ENCODE measurements at regions of chr12 and their contacts with region 1.

Region 1: DNA sequence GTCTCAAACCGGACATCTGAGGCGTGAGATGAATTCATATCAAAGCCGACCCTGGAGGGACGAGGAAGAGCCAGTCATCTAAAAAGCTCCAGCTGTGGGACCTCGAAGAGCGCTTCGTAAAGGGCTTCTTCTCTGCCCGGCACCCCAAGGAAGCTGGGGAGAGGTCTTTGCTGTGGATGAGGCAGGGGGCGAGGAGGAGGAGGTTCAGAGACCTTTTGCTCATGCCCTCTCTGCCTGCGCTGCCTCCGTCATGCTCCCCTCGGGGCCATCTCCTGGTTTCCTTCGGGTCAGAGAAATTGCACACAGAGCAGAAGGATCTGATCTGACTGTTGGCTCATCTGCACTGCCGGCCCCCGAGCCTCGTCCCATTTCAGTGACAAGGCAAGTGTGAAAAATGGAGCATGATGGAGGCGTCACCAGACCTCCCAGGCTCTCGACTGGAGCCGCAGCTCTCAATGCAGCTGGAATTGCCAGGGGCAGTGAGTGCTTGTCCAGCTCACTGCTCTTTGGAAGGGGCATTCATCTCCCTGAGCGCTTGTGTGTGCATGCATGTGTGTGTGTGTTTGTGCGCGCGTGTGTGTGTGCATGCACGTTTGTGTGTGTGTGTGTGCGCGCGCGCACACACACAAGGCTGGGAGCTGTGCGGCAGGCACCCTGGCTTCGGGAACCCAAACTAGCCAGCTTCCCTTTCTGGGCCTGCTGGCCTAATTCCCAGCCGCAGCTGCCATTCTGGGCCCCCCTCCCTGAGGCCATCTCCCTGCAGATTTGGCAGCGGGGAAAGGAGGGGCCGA is 9.2 kb downstream of the CABP1 start:
- DNase-seq: no peak
- ATAC-seq: peak; percentile 13
- H3K4me3 ChIP-seq: peak overlapping the region; percentile 61; the same call in 1 of the 2 replicates
- H3K27ac ChIP-seq: no peak overlapping the region
- H3K4me1 ChIP-seq: peaks cover 19% of the 10 kb centered on the region
- H3K27me3 ChIP-seq: no peaks in the 10 kb centered on the region
- CTCF ChIP-seq: no peak
- EP300 ChIP-seq: no peak
- POLR2A ChIP-seq: no peak
- RAD21 ChIP-seq: no peak

Region 2: DNA sequence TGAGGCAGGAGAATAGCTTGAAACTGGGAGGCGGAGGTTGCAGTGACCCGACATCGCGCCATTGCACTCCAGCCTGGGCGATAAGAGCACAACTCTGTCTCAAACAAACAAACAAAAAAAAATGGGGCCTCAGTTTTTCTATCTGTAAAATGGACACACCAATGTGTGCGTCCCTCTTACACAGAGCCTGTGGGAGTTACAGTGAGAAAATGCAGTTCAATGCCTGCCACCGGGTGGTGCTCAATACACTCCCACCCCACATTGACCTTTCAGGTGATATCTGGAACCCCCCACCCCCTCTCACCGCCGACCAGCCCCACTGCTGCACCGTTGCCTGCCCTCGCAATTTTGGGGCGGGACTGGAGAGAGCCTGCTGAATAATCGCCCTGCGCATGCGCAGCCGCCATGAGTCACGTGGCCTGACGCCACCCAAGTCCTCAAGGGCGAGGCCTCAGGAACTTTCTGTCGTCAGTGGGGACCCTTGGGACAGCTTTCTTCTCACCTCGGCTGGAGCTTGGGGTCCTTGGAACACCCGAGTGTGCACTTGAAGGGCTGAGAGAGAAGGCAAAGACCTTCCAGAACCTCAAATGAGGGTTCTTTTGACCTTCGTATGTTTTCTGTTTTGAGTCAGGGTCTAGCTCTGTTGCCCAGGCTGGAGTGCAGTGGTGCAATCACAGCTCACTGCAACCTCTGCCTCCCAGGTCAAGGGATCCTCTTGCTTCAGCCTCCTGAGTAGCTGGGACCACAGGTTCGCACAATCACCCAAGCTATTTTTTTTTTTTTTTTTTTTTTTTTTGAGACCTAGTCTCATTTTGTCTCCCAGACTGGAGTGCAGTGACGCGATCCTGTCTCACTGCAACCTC is 23.8 kb before region 1 on chr12:
- CTCF ChIA-PET with region 1: interaction called, 13 read pairs
- POLR2A ChIA-PET with region 1: no interaction called
- RAD21 ChIA-PET with region 1: interaction called, 3 read pairs
- SMC1A ChIA-PET with region 1: interaction called, 5 read pairs
- in situ Hi-C with region 1: no loop called
- intact Hi-C with region 1: no loop called
- DNase-seq: peak; percentile 11
- ATAC-seq: peak; percentile 90
- H3K4me3 ChIP-seq: no peak overlapping the region; the same call in 1 of the 2 replicates
- H3K27ac ChIP-seq: no peak overlapping the region
- H3K4me1 ChIP-seq: no peaks in the 10 kb centered on the region
- H3K27me3 ChIP-seq: no peaks in the 10 kb centered on the region; a peak in 2 of 4 replicates
- CTCF ChIP-seq: peak in 2 of 3 experiments; percentile 30 to 40; a peak in 3 of 6 replicates
- EP300 ChIP-seq: no peak
- POLR2A ChIP-seq: no peak
- RAD21 ChIP-seq: 0 out of 2 replicates have a peak, but pooled peaks have one; percentile 5

Region 3: GRCh38 chr12:120669055-120669840 is 19.6 kb after region 1 on chr12:
- CTCF ChIA-PET with region 1: interaction called, 454 read pairs
- POLR2A ChIA-PET with region 1: interaction called, 31 read pairs
- RAD21 ChIA-PET with region 1: interaction called, 77 read pairs
- SMC1A ChIA-PET with region 1: interaction called, 146 read pairs
- in situ Hi-C with region 1: no loop called
- intact Hi-C with region 1: loop called (anchors 2 kb)
- DNase-seq: peak; percentile 79
- ATAC-seq: peak; percentile 84
- H3K4me3 ChIP-seq: peak overlapping the region; percentile 39
- H3K27ac ChIP-seq: peak overlapping the region; percentile 46
- H3K4me1 ChIP-seq: peaks cover 38% of the 10 kb centered on the region
- H3K27me3 ChIP-seq: no peaks in the 10 kb centered on the region
- CTCF ChIP-seq: no peak
- EP300 ChIP-seq: no peak; a peak in 1 of 4 replicates
- POLR2A ChIP-seq: no peak
- RAD21 ChIP-seq: no peak

Region 4: DNA sequence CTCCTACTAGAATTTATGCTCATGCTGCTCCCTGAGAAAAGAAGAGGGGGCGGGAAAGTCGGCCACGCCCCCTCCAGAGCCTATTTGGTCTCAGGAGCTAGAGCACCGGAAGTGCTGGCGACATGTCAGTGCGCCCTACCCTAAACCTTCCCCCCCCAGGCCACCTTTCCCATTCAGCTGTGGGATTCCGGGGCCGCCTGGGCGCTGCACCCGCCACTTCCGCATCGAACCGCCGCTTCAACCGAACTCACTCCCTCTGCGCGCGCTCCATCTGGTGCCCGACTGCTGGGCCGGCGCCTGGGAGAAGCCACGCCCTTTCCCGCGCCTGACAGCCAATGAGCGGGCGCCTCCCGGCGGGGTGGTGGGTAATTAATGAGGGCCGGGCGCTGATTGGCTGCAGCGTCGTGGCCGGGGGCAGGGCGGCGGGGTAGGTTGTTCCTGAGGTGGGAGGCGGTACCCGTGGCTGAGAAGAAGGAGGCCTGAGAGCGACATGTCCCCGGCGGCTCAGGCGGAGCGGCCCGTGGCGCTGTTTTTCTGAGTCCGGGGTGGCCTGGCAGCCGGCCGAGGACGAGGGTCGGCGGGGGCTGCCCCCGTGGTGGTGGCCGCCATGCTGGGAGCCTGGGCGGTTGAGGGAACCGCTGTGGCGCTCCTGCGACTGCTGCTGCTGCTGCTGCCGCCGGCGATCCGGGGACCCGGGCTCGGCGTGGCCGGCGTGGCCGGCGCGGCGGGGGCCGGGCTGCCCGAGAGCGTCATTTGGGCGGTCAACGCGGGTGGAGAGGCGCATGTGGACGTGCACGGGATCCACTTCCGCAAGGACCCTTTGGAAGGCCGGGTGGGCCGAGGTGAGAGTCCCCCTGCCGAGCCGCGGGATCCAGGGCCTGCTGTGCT is 37.3 kb after region 1 on chr12 and contains the start of gene MLEC:
- CTCF ChIA-PET with region 1: interaction called, 454 read pairs
- POLR2A ChIA-PET with region 1: interaction called, 38 read pairs
- RAD21 ChIA-PET with region 1: interaction called, 144 read pairs
- SMC1A ChIA-PET with region 1: interaction called, 167 read pairs
- in situ Hi-C with region 1: no loop called
- intact Hi-C with region 1: loop called (anchors 1 kb)
- DNase-seq: peak; percentile 91
- ATAC-seq: peak; percentile 78
- H3K4me3 ChIP-seq: peak within 1 kb of the TSS; percentile 97
- H3K27ac ChIP-seq: peak within 1 kb of the TSS; percentile 96
- H3K4me1 ChIP-seq: peaks cover 15% of the 10 kb centered on the region
- H3K27me3 ChIP-seq: no peaks in the 10 kb centered on the region
- CTCF ChIP-seq: peak; percentile 26 to 79 (median 41); a peak in 5 of 6 replicates
- EP300 ChIP-seq: peak in 1 of 2 experiments; percentile 21; a peak in 1 of 4 replicates
- POLR2A ChIP-seq: peak; percentile 91
- RAD21 ChIP-seq: peak; percentile 68
- polyA plus RNA-seq, gene MLEC: 26.7 to 28.2 TPM

Region 5: DNA sequence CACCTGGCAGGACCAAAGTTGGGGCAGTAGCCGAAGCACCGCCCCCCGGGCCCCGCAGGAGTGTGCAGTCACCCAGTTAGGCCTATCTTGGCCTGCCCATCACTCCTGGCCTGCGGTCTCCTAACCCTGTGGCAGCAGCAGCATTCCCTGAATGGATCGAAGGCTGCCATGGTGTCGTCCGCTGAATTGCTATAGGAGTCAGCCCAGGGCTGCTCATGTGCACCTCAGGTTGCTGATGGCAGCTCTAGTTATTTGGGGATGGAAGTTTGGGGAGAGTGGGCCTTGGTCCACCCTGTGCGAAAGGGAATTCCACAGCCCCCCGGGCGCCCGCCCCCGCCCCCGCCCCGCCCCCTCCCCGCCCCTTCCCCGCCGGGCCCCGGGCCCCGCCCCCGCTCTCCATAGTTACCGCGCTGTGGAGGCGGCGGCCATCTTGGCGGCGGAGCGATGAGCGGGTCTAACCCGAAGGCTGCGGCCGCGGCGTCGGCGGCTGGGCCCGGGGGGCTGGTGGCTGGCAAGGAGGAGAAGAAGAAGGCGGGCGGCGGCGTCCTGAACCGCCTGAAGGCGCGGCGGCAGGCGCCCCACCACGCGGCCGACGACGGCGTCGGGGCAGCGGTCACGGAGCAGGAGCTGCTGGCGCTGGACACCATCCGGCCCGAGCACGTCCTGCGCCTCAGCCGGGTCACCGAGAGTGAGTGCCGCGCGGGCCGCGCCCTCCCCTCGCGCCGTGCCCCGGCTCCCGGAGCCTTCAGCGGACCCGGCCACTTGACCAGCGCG is 60.6 kb after region 1 on chr12 and contains the start of gene UNC119B:
- CTCF ChIA-PET with region 1: interaction called, 88 read pairs
- POLR2A ChIA-PET with region 1: interaction called, 3 read pairs
- RAD21 ChIA-PET with region 1: interaction called, 37 read pairs
- SMC1A ChIA-PET with region 1: interaction called, 68 read pairs
- in situ Hi-C with region 1: loop called (anchors 5 kb)
- intact Hi-C with region 1: loop called (anchors 1 kb)
- DNase-seq: no peak
- ATAC-seq: peak; percentile 88
- H3K4me3 ChIP-seq: peak within 1 kb of the TSS; percentile 68
- H3K27ac ChIP-seq: peak within 1 kb of the TSS; percentile 62
- H3K4me1 ChIP-seq: peaks cover 15% of the 10 kb centered on the region
- H3K27me3 ChIP-seq: no peaks in the 10 kb centered on the region
- CTCF ChIP-seq: no peak
- EP300 ChIP-seq: no peak
- POLR2A ChIP-seq: peak; percentile 79
- RAD21 ChIP-seq: no peak
- polyA plus RNA-seq, gene UNC119B: 4.3 to 8.5 TPM

Region 6: GRCh38 chr12:120725659-120726509 is 76.2 kb after region 1 on chr12 and contains the start of gene ACADS:
- CTCF ChIA-PET with region 1: interaction called, 13 read pairs
- POLR2A ChIA-PET with region 1: no interaction called
- RAD21 ChIA-PET with region 1: interaction called, 5 read pairs
- SMC1A ChIA-PET with region 1: no interaction called
- in situ Hi-C with region 1: no loop called
- intact Hi-C with region 1: no loop called
- DNase-seq: peak; percentile 40
- ATAC-seq: peak; percentile 100
- H3K4me3 ChIP-seq: peak within 1 kb of the TSS; percentile 59
- H3K27ac ChIP-seq: peak within 1 kb of the TSS; percentile 46
- H3K4me1 ChIP-seq: peaks cover 22% of the 10 kb centered on the region
- H3K27me3 ChIP-seq: no peaks in the 10 kb centered on the region
- CTCF ChIP-seq: no peak
- EP300 ChIP-seq: no peak
- POLR2A ChIP-seq: peak; percentile 91
- RAD21 ChIP-seq: no peak
- polyA plus RNA-seq, gene ACADS: 0.05 to 0.38 TPM

Region 7: DNA sequence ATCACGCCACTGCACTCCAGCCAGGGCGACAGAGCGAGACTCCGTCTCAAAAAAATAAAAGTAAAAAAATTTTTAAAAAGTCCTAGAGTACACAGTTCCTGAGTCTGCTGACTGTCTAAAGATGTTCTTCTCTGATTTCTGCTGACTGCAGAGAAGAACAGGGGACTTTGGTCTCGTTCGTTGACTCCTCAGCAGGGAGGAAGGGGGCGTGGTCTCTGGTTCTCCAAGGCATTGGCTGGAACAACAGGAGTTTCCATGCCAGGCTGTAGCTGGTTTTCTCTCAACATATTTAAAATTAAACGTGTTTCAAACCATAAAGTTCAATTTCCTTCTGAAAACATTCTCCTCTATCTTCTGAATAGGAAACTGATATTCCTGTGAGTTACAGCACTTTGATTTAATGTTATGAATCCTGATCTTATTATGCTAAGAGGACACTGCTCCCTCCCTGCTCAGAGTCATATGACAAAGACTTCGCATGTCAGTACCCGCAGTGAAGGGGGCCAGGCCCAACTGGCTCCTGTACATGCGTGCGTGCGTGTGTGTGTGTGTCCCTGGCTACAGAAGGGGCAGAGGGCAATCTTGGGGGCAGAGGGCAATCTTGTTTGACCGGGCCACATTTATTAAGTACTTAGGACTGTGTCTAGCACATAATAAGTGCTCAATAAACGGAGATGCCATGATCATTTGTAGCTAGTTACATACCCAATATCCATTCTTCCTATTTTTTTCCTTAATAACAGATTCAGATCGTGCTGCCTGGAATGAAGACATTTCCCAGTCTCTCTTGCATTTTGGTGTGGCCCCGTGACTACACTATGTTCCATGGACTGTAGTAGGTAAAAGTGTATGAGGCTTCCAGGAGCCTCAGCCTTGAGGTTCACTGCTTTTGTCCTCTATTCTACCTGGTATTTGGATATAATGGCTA is 312.2 kb after region 1 on chr12:
- CTCF ChIA-PET with region 1: interaction called, 10 read pairs
- POLR2A ChIA-PET with region 1: interaction called, 7 read pairs
- RAD21 ChIA-PET with region 1: interaction called, 8 read pairs
- SMC1A ChIA-PET with region 1: no interaction called
- in situ Hi-C with region 1: no loop called
- intact Hi-C with region 1: no loop called
- DNase-seq: no peak
- ATAC-seq: no peak
- H3K4me3 ChIP-seq: no peak overlapping the region
- H3K27ac ChIP-seq: no peak overlapping the region
- H3K4me1 ChIP-seq: peaks cover 10% of the 10 kb centered on the region
- H3K27me3 ChIP-seq: no peaks in the 10 kb centered on the region
- CTCF ChIP-seq: no peak
- EP300 ChIP-seq: no peak
- POLR2A ChIP-seq: no peak
- RAD21 ChIP-seq: no peak

Region 8: GRCh38 chr12:121093487-121093891 is 443.9 kb after region 1 on chr12:
- CTCF ChIA-PET with region 1: no interaction called
- POLR2A ChIA-PET with region 1: no interaction called
- RAD21 ChIA-PET with region 1: no interaction called
- SMC1A ChIA-PET with region 1: no interaction called
- in situ Hi-C with region 1: no loop called
- intact Hi-C with region 1: no loop called
- DNase-seq: no peak
- ATAC-seq: no peak
- H3K4me3 ChIP-seq: no peak overlapping the region
- H3K27ac ChIP-seq: no peak overlapping the region
- H3K4me1 ChIP-seq: peaks cover 9% of the 10 kb centered on the region
- H3K27me3 ChIP-seq: no peaks in the 10 kb centered on the region
- CTCF ChIP-seq: no peak
- EP300 ChIP-seq: no peak
- POLR2A ChIP-seq: no peak
- RAD21 ChIP-seq: no peak

Measured in GM12878 (cell line).